ENCODE measurements at regions of chr9 and their contacts with region 1.

Region 1: DNA sequence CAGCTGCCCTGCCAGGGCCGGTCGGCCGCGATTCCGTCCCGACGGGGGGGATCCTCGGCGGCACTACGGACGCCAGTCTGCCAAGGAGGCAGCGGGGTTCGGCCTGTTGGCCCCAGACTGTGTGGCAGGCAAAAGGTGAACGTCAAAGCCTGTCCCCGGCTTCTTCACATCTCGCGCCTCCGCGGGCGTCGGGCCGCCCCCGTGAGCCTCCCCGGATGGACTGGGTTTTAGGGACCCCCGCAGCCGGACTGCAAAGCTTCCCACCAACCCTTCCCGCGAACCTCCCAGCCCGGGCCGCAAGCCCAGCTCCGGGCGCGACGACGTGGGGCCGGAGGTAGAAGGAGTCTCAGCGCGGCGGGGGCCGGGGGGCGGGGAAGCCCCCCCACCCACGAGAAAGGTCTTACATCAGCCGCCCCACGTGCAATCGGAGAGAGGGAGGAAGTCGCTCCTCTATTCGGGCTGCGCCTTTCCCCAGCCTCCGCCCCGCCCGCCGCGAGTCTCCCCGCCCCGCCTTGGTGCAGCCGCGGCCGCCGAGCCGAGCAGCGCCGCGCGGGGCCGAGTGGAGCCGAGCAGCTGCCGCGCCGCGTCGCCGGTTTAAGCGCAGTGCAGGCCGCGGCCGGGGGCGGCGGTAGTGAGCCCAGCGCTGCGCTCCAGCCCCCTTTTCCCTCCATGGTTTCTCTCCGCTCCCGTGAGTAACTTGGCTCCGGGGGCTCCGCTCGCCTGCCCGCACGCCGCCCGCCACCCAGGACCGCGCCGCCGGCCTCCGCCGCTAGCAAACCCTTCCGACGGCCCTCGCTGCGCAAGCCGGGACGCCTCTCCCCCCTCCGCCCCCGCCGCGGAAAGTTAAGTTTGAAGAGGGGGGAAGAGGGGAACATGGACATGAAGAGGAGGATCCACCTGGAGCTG is at the start of gene ANP32B:
- DNase-seq: peak; percentile 94
- H3K4me3 ChIP-seq: peak within 1 kb of the TSS; percentile 88 to 98 (median 96)
- H3K27ac ChIP-seq: peak within 1 kb of the TSS; percentile 97 to 100 (median 99)
- H3K4me1 ChIP-seq: peaks cover 28 to 52% (median 35%) of the 10 kb centered on the region in 4 donors
- H3K27me3 ChIP-seq: no peaks in the 10 kb centered on the region
- CTCF ChIP-seq: peak; percentile 66 to 96 (median 87)
- EP300 ChIP-seq: no peak
- POLR2A ChIP-seq: peak; percentile 34
- total RNA-seq, gene ANP32B: 37.4 to 65.6 (median 43.0) TPM

Region 2: GRCh38 chr9:96654443-96655197 is 1328.3 kb before region 1 on chr9:
- in situ Hi-C with region 1: no loop called
- intact Hi-C with region 1: no loop called
- DNase-seq: peak; percentile 81
- H3K4me3 ChIP-seq: peak overlapping the region; percentile 63 to 76 (median 65)
- H3K27ac ChIP-seq: peak overlapping the region; percentile 94 to 96 (median 96)
- H3K4me1 ChIP-seq: peaks cover 6 to 18% (median 10%) of the 10 kb centered on the region in 4 donors
- H3K27me3 ChIP-seq: no peaks in the 10 kb centered on the region
- CTCF ChIP-seq: peak in 1 of 5 experiments; percentile 14
- EP300 ChIP-seq: no peak
- POLR2A ChIP-seq: peak; percentile 38

Region 3: GRCh38 chr9:97921959-97922724 is 60.8 kb before region 1 on chr9 and contains the start of gene TRMO:
- in situ Hi-C with region 1: no loop called
- intact Hi-C with region 1: loop called (anchors 5 kb)
- DNase-seq: peak; percentile 98
- H3K4me3 ChIP-seq: peak within 1 kb of the TSS; percentile 49 to 62 (median 52)
- H3K27ac ChIP-seq: peak within 1 kb of the TSS; percentile 94 to 98 (median 96)
- H3K4me1 ChIP-seq: peaks cover 0 to 35% (median 12%) of the 10 kb centered on the region in 4 donors
- H3K27me3 ChIP-seq: peaks cover 15% of the 10 kb centered on the region
- CTCF ChIP-seq: peak; percentile 35 to 68 (median 47)
- EP300 ChIP-seq: peak; percentile 56
- POLR2A ChIP-seq: peak; percentile 96
- total RNA-seq, gene TRMO: 25.6 to 37.8 (median 31.1) TPM

Region 4: DNA sequence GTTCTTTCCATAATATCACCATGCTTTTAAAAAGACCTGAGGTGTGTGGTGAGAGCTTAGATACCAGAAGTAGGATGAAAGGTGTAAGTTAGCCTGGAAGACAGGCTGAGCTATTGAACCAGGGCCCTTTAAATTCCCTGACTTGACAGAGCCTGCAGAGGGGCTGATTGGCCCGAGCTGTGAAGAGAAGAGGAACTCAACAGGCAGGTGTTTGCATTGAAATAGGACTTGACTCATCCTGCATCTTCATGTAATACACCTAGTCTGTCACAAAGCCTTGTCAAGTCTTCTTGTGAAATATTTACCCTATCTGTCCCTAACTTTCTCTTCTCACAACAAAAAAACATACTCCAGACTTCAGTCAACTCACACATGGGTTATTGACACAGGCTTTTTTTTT is 16.4 kb before region 1 on chr9:
- in situ Hi-C with region 1: no loop called
- intact Hi-C with region 1: no loop called
- DNase-seq: no peak
- H3K4me3 ChIP-seq: no peak overlapping the region
- H3K27ac ChIP-seq: no peak overlapping the region
- H3K4me1 ChIP-seq: no peaks in the 10 kb centered on the region
- H3K27me3 ChIP-seq: peaks cover 17% of the 10 kb centered on the region
- CTCF ChIP-seq: no peak
- EP300 ChIP-seq: no peak
- POLR2A ChIP-seq: no peak

Region 5: GRCh38 chr9:98034593-98035546 is 51.9 kb after region 1 on chr9:
- in situ Hi-C with region 1: no loop called
- intact Hi-C with region 1: loop called (anchors 10 kb)
- DNase-seq: peak; percentile 93
- H3K4me3 ChIP-seq: no peak overlapping the region
- H3K27ac ChIP-seq: no peak overlapping the region
- H3K4me1 ChIP-seq: peaks cover 0 to 12% (median 8%) of the 10 kb centered on the region in 4 donors
- H3K27me3 ChIP-seq: no peaks in the 10 kb centered on the region
- CTCF ChIP-seq: peak; percentile 80 to 88 (median 83)
- EP300 ChIP-seq: no peak
- POLR2A ChIP-seq: no peak

Region 6: DNA sequence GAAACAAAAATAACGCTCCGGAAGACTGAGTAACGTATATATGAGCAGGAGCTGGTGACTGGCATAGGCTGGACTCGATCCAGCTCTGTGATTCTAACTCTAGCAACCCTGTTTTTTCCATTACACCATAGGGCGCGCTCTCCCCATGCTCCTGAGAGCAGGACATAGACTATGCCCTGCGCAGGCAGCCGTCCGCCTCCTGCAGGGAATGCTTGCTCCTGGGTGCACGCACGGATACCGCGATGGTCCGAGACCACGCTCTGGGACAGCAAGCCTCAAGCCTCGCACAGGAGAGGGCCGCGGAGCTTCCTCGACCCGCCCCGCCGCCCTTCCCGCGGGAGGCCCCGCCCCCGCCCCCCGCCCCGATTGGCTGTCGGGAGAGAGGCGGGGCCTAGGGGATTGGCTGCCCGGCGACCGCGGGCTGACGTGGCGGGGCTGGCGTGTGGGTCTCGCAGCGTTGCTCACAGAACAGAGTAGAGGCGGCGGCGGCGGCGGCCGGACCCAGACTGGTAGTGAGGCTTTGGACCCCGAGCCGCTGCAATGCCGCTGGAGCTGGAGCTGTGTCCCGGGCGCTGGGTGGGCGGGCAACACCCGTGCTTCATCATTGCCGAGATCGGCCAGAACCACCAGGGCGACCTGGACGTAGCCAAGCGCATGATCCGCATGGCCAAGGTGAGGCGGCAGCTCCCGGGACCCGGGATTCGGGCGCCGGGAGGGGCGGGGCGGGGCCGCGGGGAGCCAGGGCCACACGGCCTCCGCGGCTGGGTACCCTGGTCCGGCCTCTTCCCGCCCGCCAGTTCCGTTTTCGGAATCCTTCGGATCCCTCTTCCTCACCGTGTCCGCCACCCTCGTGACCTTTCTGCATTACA is 73.6 kb after region 1 on chr9 and contains the start of gene NANS:
- in situ Hi-C with region 1: no loop called
- intact Hi-C with region 1: loop called (anchors 5 kb)
- DNase-seq: peak; percentile 97
- H3K4me3 ChIP-seq: peak within 1 kb of the TSS; percentile 67 to 88 (median 80)
- H3K27ac ChIP-seq: peak within 1 kb of the TSS; percentile 92 to 99 (median 97)
- H3K4me1 ChIP-seq: peaks cover 8 to 40% (median 25%) of the 10 kb centered on the region in 4 donors
- H3K27me3 ChIP-seq: no peaks in the 10 kb centered on the region
- CTCF ChIP-seq: peak in 2 of 5 experiments; percentile 12 to 17
- EP300 ChIP-seq: no peak
- POLR2A ChIP-seq: peak; percentile 98
- total RNA-seq, gene NANS: 86.6 to 319 (median 269) TPM

Region 7: GRCh38 chr9:98087420-98088354 is 104.8 kb after region 1 on chr9:
- in situ Hi-C with region 1: loop called in 1 of 4 experiments (anchors 25 kb)
- intact Hi-C with region 1: no loop called
- DNase-seq: peak; percentile 22
- H3K4me3 ChIP-seq: peak overlapping the region in 2 of 4 donors; percentile 8 to 30
- H3K27ac ChIP-seq: no peak overlapping the region
- H3K4me1 ChIP-seq: peaks cover 0 to 20% (median 2%) of the 10 kb centered on the region in 4 donors
- H3K27me3 ChIP-seq: no peaks in the 10 kb centered on the region
- CTCF ChIP-seq: peak in 2 of 5 experiments; percentile 9 to 11
- EP300 ChIP-seq: no peak
- POLR2A ChIP-seq: no peak